AG04450 (cell line): ENCODE measurements at regions of chr3 and their contacts with region 1.

Region 1: GRCh38 chr3:11195721-11196332 is 41.5 kb downstream of the HRH1 start:
- DNase-seq: no peak
- H3K4me3 ChIP-seq: 0 out of 2 replicates have a peak overlapping the region, but pooled peaks have one; percentile 0
- H3K27ac ChIP-seq: peak overlapping the region; percentile 77
- H3K27me3 ChIP-seq: no peaks in the 10 kb centered on the region
- CTCF ChIP-seq: peak; percentile 13; the same call in 1 of the 2 replicates

Region 2: GRCh38 chr3:11185564-11186317 is 10.1 kb before region 1 on chr3:
- CTCF ChIA-PET with region 1: interaction called, 3 read pairs
- POLR2A ChIA-PET with region 1: interaction called, 20 read pairs
- DNase-seq: peak; percentile 88
- H3K4me3 ChIP-seq: no peak overlapping the region
- H3K27ac ChIP-seq: peak overlapping the region; percentile 65
- H3K27me3 ChIP-seq: no peaks in the 10 kb centered on the region
- CTCF ChIP-seq: no peak